HEK293T (cell line): ENCODE measurements at regions of chr10 and their contacts with region 1.

Region 1: DNA sequence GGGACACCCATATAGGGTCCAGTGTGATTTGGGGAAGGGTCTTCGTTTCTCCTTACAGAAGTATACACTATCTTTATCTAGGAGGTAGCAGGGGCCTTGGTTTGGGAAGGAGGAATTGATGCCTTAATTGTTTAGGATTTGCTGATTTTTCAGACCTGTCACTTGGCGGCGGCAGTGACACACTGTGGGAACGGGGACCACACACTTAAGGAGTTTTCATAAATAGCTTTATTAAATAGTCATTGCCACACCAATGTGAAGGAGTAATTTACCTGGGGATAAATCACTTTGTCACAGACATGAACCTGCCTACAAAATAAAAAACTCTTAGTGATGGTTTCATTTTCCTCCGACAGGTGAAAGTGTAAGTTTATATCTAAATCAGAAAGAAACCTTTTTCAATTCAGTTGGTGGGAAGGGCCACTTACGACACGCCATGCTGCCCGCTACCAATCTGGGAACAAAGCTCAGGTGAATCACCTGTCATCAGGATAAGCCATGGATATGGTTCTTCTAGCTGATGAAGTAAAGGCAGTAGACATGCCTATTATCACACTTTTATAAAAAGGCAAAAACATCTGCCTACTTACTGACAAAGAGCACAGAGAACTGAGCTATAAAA is 12.3 kb upstream of the ENO4 start:
- DNase-seq: no peak

Region 2: GRCh38 chr10:116849248-116850057 is 12.4 kb after region 1 on chr10 and contains the start of gene ENO4:
- CTCF ChIA-PET with region 1: interaction called, 3 read pairs
- POLR2A ChIA-PET with region 1: interaction called, 15 read pairs
- DNase-seq: peak; percentile 95

Region 3: GRCh38 chr10:117174439-117175214 is 337.6 kb after region 1 on chr10:
- CTCF ChIA-PET with region 1: interaction called, 16 read pairs
- POLR2A ChIA-PET with region 1: no interaction called
- DNase-seq: peak; percentile 84